ENCODE measurements at regions of chr22 and their contacts with region 1.

Region 1: GRCh38 chr22:39534591-39535356 is 2.2 kb upstream of the RPS19BP1 start:
- DNase-seq: peak; percentile 87
- H3K4me3 Mint-ChIP-seq: no peak overlapping the region
- H3K27ac Mint-ChIP-seq: no peak overlapping the region
- H3K4me1 Mint-ChIP-seq: peaks cover 25% of the 10 kb centered on the region
- H3K27me3 Mint-ChIP-seq: peaks cover 4% of the 10 kb centered on the region
- CTCF ChIP-seq: peak; percentile 95

Region 2: DNA sequence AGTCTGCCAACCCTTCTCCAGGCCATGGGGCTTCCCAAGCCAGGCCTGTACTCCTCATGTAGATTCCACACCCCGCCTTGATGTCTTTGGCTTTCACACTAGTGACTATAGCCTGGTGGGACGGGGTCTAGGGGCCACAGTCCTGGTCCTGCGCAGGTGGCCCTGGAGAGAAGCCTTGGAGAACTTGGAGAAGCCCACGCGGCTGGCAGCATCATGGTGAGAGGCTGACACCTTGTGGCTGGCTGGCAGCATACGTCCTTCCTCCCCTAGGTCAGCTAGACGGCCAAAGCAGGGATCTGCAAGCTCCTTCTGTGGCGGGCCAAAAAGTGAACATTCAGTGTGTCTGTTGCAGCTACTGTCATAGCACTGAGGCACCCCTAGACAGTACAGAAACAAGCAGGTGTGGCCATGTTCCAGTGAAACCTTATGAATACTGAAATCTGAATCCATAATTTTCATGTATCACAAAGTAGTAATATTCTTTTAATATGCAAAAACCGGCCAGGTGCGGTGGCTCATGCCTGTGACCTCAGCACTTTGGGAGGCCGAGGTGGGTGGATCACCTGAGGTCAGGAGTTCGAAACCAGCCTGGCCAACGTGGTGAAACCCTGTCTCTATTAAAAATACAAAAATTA is 501.9 kb after region 1 on chr22:
- CTCF ChIA-PET with region 1: interaction called, 4 read pairs
- intact Hi-C with region 1: loop called (anchors 5 kb)
- DNase-seq: peak; percentile 68
- H3K4me3 Mint-ChIP-seq: no peak overlapping the region
- H3K27ac Mint-ChIP-seq: no peak overlapping the region
- H3K4me1 Mint-ChIP-seq: no peaks in the 10 kb centered on the region
- H3K27me3 Mint-ChIP-seq: peaks cover 16% of the 10 kb centered on the region
- CTCF ChIP-seq: peak; percentile 77